ENCODE measurements at regions of chr5 and their contacts with region 1.

Region 1: DNA sequence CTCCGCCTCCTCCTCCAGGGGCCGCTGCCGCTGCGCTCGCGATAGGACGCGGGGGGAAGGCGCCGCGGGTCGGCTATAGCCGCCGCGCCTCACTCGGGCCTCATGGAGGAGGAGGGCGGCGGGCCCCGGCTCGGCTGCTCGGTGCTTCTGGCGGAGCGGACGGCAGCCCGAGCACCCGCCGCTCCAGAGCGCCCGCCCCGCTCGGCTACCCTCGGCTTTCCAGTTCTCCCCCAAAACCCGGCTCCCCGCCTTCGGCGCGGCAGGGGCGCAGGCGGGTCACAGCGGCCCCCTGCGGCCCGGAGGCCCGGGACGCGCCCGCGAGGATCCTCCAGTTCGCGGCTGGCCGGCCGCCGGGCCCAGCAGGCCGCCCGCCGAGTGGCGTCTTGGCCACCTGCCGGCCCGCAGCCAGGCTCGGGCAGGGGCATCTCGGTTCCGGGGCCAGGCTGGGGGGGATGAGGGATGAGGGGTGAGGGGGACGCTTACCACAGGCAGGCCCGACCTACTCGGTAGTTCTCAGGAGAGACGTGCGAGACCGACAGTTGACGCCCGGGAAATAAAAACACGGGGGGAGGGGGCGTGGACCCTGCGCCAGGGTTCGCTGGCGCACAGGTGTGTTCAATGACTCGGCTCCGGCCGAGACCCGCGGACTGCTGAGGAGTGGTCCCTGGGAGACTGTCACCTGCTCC is at the start of gene PAIP1:
- DNase-seq: peak; percentile 82
- H3K4me3 Mint-ChIP-seq: peak within 1 kb of the TSS; percentile 84
- H3K27ac Mint-ChIP-seq: peak within 1 kb of the TSS; percentile 95
- H3K4me1 Mint-ChIP-seq: peaks cover 17% of the 10 kb centered on the region
- H3K27me3 Mint-ChIP-seq: peaks cover 3% of the 10 kb centered on the region
- total RNA-seq, gene PAIP1: 41.7 to 42.9 TPM

Region 2: GRCh38 chr5:42950440-42951292 is 606.3 kb before region 1 on chr5:
- CTCF ChIA-PET with region 1: no interaction called
- intact Hi-C with region 1: loop called (anchors 10 kb)
- DNase-seq: peak; percentile 83
- H3K4me3 Mint-ChIP-seq: peak overlapping the region; percentile 87
- H3K27ac Mint-ChIP-seq: peak overlapping the region; percentile 88
- H3K4me1 Mint-ChIP-seq: peaks cover 9% of the 10 kb centered on the region
- H3K27me3 Mint-ChIP-seq: no peaks in the 10 kb centered on the region

Region 3: DNA sequence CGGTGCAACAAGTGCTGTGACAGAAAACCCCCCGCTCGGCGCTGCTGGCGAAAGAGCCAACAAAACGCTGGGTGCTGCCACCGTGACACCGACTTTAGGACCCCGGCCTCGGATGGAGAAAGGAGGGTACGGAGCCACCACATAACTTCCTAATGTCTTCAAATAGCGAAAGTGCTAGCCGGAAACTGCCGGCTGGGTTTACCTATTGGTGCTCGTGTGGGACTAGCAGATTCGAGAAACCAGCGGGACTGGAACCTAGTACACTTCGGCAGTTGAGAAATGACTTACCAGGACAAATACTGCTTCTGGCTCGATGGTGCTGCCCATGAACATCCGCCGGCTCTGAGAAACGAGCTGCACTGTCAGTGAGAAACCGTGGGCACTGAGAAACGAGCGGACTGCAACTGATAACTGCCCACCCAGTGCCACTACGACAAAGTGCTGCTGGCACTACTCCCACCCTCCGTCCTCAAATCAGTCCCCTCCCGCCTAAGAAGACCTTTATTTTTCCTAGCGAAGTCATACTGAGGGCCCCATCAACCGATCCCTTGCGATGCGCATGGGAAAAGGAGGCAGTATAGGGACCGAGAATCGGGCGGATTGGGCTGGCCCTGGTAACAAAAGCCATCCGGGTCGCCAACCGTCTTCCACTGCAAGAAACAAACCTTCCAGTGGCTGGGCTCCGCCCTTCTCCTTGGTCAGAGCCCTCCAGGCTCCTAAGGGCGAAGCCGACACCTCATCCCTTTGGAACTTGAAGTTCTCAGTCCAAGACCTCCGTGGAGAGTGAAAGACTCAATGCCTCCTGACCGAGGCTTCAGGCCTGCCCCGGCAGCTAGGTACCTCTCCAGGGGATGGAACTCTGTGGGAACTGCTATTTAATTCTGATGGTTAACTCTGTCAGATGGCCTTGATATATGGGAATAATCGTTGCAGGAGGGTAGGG is 489.9 kb before region 1 on chr5:
- CTCF ChIA-PET with region 1: no interaction called
- intact Hi-C with region 1: loop called (anchors 1 kb)
- DNase-seq: peak; percentile 92
- H3K4me3 Mint-ChIP-seq: peak overlapping the region; percentile 98
- H3K27ac Mint-ChIP-seq: peak overlapping the region; percentile 98
- H3K4me1 Mint-ChIP-seq: peaks cover 36% of the 10 kb centered on the region
- H3K27me3 Mint-ChIP-seq: no peaks in the 10 kb centered on the region

Region 4: DNA sequence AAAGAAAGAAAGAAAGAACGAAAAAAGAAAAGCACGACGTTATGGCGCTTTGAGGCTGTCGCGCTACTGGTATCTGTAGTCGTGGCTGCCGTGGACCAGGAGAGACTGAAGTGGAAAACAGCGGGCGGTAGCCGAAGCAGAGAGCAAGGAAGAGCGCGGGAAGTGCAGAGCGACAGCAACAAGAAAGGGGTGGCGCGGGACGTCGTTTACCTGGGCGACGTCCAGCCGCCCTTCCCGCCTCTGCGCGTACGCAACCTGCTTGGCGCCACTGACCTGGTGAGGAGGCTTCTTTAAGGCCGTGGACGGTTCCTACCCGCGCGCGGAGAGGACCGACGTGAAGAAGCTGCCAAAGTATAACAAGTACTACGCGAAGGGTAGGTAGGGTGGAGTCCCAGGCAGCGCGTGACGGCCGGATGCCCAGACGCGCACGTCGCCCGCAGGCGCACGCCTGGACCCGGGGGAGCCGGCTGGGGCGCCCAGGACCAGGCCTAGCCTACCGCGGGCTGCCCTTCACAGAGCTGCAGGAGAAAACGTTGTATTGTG is 160.2 kb before region 1 on chr5:
- CTCF ChIA-PET with region 1: no interaction called
- intact Hi-C with region 1: loop called (anchors 1 kb)
- DNase-seq: peak; percentile 75
- H3K4me3 Mint-ChIP-seq: peak overlapping the region; percentile 88
- H3K27ac Mint-ChIP-seq: peak overlapping the region; percentile 87
- H3K4me1 Mint-ChIP-seq: peaks cover 32% of the 10 kb centered on the region
- H3K27me3 Mint-ChIP-seq: no peaks in the 10 kb centered on the region

Region 5: DNA sequence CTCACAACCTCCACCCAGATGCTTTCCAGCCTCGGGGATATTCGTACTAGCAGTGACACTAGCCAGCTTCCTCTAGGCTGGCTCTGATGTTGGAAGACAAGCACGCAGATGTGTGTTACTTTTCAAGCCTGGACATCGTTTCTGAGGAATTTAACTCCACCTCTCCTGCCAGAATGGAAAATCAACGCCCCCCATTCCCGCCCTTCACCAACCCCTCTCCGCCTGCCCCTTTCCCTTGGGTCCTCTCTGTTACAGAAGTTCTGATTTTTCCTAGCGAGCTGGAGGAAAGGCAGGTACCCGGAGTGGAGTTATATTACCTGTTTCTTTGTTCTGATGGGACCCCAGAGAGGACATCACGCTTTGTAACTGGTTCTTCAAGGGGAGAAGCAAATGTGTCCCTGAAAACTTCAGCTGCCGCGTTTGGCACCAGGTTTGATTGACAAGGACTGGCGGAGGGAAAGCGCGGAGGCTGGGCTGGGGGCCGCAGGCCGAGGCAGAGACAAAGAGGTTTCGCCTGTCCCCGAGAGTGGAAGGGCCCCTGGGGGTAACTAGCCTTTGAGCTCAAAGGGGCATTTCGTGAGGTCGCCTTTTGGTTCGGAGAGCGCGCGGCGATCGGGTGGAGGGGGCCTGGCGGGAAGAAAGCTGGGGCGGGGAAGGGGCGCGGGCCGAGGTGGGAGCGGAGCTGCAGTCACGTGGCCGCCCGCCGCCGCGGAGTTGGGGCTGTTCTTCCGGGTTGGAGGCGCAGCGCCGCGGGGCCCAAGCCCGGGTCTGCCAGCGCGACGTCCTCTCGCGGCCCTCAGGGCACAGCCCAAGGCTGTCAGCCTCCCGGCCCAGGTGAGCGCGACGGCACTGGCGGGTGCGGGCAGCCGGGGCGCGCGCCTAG is 45.7 kb after region 1 on chr5 and contains the start of gene NNT:
- CTCF ChIA-PET with region 1: interaction called, 3 read pairs
- intact Hi-C with region 1: loop called (anchors 1 kb)
- DNase-seq: peak; percentile 74
- H3K4me3 Mint-ChIP-seq: peak within 1 kb of the TSS; percentile 87
- H3K27ac Mint-ChIP-seq: peak within 1 kb of the TSS; percentile 92
- H3K4me1 Mint-ChIP-seq: peaks cover 45% of the 10 kb centered on the region
- H3K27me3 Mint-ChIP-seq: no peaks in the 10 kb centered on the region
- total RNA-seq, gene NNT: 98.4 to 98.9 TPM

Region 6: DNA sequence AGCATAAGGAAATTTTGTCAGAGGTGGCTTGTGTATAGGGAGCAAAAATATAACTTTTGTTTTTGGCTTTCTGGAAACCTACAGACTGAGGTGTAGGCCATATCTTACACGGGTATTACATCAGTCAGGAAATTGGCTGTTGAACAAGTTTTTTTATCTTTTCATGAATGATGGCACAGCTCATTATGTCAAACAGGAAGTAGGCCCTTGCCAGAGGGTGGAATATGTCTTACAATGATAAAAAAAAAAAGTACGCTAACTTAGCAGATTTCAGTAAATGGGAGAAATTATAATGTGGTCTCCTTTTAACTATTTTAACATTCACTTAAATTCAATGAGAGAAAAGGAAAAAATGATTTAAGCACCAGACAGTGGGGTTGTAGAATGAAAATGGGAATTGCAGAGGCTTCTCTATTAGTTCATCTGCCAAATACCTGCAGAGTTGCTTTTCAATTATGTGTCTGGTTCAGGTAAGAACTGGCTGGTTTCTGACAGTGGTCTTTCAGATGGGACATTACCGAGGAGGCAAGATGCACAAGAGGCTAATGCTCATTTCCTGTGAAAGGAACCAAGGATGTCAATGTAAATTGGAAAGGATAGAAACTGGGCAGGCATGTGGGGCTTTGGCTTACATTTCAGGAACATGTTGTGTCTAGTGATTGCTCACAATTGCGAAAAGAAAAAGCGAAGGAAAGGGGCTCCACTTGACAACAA is 215.9 kb after region 1 on chr5:
- CTCF ChIA-PET with region 1: no interaction called
- intact Hi-C with region 1: loop called (anchors 5 kb)
- DNase-seq: no peak
- H3K4me3 Mint-ChIP-seq: no peak overlapping the region
- H3K27ac Mint-ChIP-seq: peak overlapping the region; percentile 82
- H3K4me1 Mint-ChIP-seq: peaks cover 21% of the 10 kb centered on the region
- H3K27me3 Mint-ChIP-seq: no peaks in the 10 kb centered on the region

Region 7: GRCh38 chr5:43917925-43918324 is 360.9 kb after region 1 on chr5:
- CTCF ChIA-PET with region 1: no interaction called
- intact Hi-C with region 1: no loop called
- DNase-seq: no peak
- H3K4me3 Mint-ChIP-seq: no peak overlapping the region
- H3K27ac Mint-ChIP-seq: no peak overlapping the region
- H3K4me1 Mint-ChIP-seq: no peaks in the 10 kb centered on the region
- H3K27me3 Mint-ChIP-seq: no peaks in the 10 kb centered on the region

Region 8: GRCh38 chr5:44808435-44809214 is 1251.6 kb after region 1 on chr5 and contains the start of gene MRPS30:
- CTCF ChIA-PET with region 1: no interaction called
- intact Hi-C with region 1: loop called (anchors 1 kb)
- DNase-seq: peak; percentile 96
- H3K4me3 Mint-ChIP-seq: peak within 1 kb of the TSS; percentile 96
- H3K27ac Mint-ChIP-seq: peak within 1 kb of the TSS; percentile 95
- H3K4me1 Mint-ChIP-seq: peaks cover 16% of the 10 kb centered on the region
- H3K27me3 Mint-ChIP-seq: peaks cover 1% of the 10 kb centered on the region
- total RNA-seq, gene MRPS30: 46.1 to 49.3 TPM

Measured in activated naive CD4-positive, alpha-beta T cell treated with anti-CD3 and anti-CD28 coated beads for 36 hours (primary cell).